ENCODE measurements at regions of chr1 and their contacts with region 1.

Region 1: GRCh38 chr1:110106013-110106941 is 6.0 kb upstream of the UBL4B start:
- DNase-seq: peak; percentile 72
- ATAC-seq: peak; percentile 89

Region 2: GRCh38 chr1:109446085-109446695 is 660.1 kb before region 1 on chr1:
- intact Hi-C with region 1: no loop called
- DNase-seq: no peak
- ATAC-seq: no peak

Region 3: GRCh38 chr1:109985276-109986053 is 120.8 kb before region 1 on chr1:
- intact Hi-C with region 1: no loop called
- DNase-seq: no peak
- ATAC-seq: no peak

Region 4: GRCh38 chr1:110053557-110054428 is 52.5 kb before region 1 on chr1:
- intact Hi-C with region 1: loop called (anchors 5 kb)
- DNase-seq: peak; percentile 85
- ATAC-seq: peak; percentile 75

Region 5: GRCh38 chr1:110161877-110162276 is 55.6 kb after region 1 on chr1:
- intact Hi-C with region 1: no loop called
- DNase-seq: no peak
- ATAC-seq: no peak

Region 6: DNA sequence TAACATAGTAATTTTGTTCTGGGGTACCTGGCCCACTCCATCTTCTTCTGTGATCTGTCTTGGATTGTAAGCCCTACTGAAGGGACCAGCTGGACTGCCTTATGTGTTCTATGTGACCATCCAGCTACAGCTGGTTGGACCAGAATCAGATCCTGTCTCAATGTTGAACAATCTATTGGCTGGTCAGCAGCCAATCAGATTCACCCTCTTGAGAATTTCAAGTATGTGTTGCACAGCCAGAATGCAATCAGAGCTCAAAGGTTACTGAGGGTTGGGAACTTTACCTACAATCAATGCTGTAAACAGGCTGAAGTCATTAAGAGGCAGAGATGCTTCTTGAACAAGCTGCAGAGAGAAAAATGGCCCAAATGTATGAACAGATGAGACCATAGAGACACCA is 165.8 kb after region 1 on chr1:
- intact Hi-C with region 1: no loop called
- DNase-seq: no peak
- ATAC-seq: no peak